H1 (cell line): ENCODE measurements at regions of chrX and their contacts with region 1.

Region 1: DNA sequence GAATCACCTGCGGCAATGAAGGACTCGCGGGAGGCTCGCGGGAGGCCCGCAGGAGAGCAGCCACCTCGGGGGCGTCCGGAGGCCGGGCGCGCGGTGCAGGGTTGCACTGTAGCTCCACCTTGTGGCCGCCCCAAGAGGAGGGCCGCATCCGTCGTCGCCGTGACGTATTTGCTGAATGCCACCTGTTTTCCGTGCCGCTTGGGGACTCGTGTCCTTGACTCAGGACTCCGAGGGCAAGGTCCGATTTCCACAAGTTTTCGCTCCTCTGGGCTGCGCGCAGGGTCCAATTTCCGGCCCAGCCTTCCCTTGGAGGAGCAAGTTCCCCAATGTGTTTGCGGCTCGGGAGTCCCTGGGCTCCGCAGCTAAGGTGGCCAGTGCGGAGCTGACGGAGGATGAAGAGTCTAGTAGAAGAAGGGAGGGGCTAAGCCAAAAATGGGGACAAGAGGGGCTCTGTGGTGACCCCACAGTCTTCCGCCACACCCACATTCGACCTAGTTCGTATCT is 10.7 kb upstream of the DLG3 start:
- DNase-seq: peak; percentile 36 to 76
- H3K4me3 ChIP-seq: peak overlapping the region; percentile 44 to 88 (median 76)
- H3K27ac ChIP-seq: peak overlapping the region; percentile 84
- H3K4me1 ChIP-seq: peaks cover 0 to 6% (median 1%) of the 10 kb centered on the region in 4 experiments; a peak in 4 of 7 replicates
- H3K27me3 ChIP-seq: no peaks in the 10 kb centered on the region
- CTCF ChIP-seq: peak in 2 of 3 experiments; percentile 56 to 80; a peak in 3 of 4 replicates
- EP300 ChIP-seq: no peak
- POLR2A ChIP-seq: 0 out of 3 replicates have a peak, but pooled peaks of 1 of the 2 experiments have one; percentile 9
- RAD21 ChIP-seq: peak; percentile 53 to 68; a peak in 3 of 4 replicates

Region 2: GRCh38 chrX:70262952-70263567 is 170.8 kb before region 1 on chrX:
- CTCF ChIA-PET with region 1: no interaction called
- POLR2A ChIA-PET with region 1: no interaction called
- DNase-seq: peak; percentile 25 to 70
- H3K4me3 ChIP-seq: no peak overlapping the region
- H3K27ac ChIP-seq: no peak overlapping the region
- H3K4me1 ChIP-seq: peaks cover 0 to 2% (median 0%) of the 10 kb centered on the region in 4 experiments; a peak in 1 of 7 replicates
- H3K27me3 ChIP-seq: no peaks in the 10 kb centered on the region
- CTCF ChIP-seq: peak; percentile 60 to 82 (median 78)
- EP300 ChIP-seq: no peak
- POLR2A ChIP-seq: no peak
- RAD21 ChIP-seq: peak; percentile 73 to 81

Region 3: GRCh38 chrX:70402721-70403120 is 31.2 kb before region 1 on chrX:
- CTCF ChIA-PET with region 1: no interaction called
- POLR2A ChIA-PET with region 1: no interaction called
- DNase-seq: no peak
- H3K4me3 ChIP-seq: no peak overlapping the region
- H3K27ac ChIP-seq: no peak overlapping the region
- H3K4me1 ChIP-seq: no peaks in the 10 kb centered on the region
- H3K27me3 ChIP-seq: no peaks in the 10 kb centered on the region
- CTCF ChIP-seq: no peak
- EP300 ChIP-seq: no peak
- POLR2A ChIP-seq: no peak
- RAD21 ChIP-seq: no peak

Region 4: DNA sequence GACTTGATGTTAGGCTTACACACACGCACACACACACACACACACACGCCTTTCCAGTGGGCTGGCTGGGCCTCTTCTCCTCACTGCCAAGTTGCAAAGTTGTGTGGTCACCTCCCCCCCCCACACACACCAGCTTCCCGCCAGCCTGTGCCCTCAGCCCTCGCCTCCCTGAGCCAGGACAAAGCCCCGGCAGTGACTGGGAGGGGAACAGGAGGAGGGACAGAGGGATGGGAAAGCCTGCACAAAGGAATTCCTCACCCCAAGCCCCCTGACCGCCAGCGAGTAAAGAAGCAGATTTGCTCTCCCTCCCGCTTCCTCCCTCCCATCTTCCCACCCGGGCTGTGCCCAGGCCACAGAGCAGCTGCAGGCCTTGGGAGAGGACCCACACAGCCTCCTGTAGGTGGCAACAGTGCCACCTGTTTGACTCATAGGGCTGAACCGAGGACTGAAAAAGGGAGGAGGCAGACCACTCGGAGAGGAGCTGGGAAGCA is 11.0 kb before region 1 on chrX and contains the start of gene GDPD2:
- CTCF ChIA-PET with region 1: interaction called, 43 read pairs
- POLR2A ChIA-PET with region 1: interaction called, 52 read pairs
- DNase-seq: peak; percentile 59 to 61
- H3K4me3 ChIP-seq: peak within 1 kb of the TSS; percentile 61 to 75 (median 64)
- H3K27ac ChIP-seq: peak within 1 kb of the TSS; percentile 73; the same call in 1 of the 2 replicates
- H3K4me1 ChIP-seq: peaks cover 5 to 20% (median 18%) of the 10 kb centered on the region in 4 experiments
- H3K27me3 ChIP-seq: no peaks in the 10 kb centered on the region
- CTCF ChIP-seq: peak; percentile 8 to 51 (median 34); a peak in 2 of 4 replicates
- EP300 ChIP-seq: no peak
- POLR2A ChIP-seq: peak in 1 of 2 experiments; percentile 37; a peak in 2 of 3 replicates
- RAD21 ChIP-seq: peak; percentile 44 to 51; a peak in 3 of 4 replicates
- total RNA-seq, gene GDPD2: 25.6 and 27.6 TPM in 2 replicates

Region 5: GRCh38 chrX:70444326-70444945 is 10.5 kb after region 1 on chrX and contains the start of gene DLG3:
- CTCF ChIA-PET with region 1: interaction called, 11 read pairs
- POLR2A ChIA-PET with region 1: interaction called, 22 read pairs
- DNase-seq: peak in 1 of 2 experiments; percentile 66
- H3K4me3 ChIP-seq: peak within 1 kb of the TSS; percentile 2 to 54 (median 10); a peak in 4 of 8 replicates
- H3K27ac ChIP-seq: no peak within 1 kb of the TSS
- H3K4me1 ChIP-seq: no peaks in the 10 kb centered on the region; a peak in 1 of 7 replicates
- H3K27me3 ChIP-seq: peaks cover 0 to 12% (median 10%) of the 10 kb centered on the region in 4 experiments; a peak in 4 of 7 replicates
- CTCF ChIP-seq: no peak
- EP300 ChIP-seq: no peak
- POLR2A ChIP-seq: no peak
- RAD21 ChIP-seq: no peak
- total RNA-seq, gene DLG3: 57.1 and 63.8 TPM in 2 replicates

Region 6: DNA sequence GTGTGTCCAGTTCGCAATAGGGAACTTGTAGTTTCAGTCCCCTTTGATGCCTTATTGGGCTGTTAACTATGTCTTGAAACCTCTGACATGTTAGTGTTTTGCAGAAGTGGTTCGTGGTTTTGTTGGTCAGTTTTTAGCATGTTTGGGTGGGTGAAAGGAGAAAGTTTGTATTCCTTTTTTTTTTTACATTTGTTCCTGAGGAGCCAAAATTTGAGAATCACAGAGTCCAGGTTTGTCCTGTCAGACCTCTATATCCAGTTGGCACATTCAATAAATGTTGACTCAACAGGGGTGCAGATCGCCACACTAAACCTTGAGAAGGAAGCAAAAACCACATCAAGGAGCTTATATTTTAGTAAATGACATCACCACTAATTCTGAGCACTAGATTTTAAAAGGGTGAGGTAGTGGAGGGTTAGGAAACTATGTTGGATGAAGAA is 37.0 kb after region 1 on chrX:
- CTCF ChIA-PET with region 1: no interaction called
- POLR2A ChIA-PET with region 1: no interaction called
- DNase-seq: no peak
- H3K4me3 ChIP-seq: no peak overlapping the region
- H3K27ac ChIP-seq: no peak overlapping the region
- H3K4me1 ChIP-seq: peaks cover 0 to 3% (median 1%) of the 10 kb centered on the region in 4 experiments; a peak in 3 of 7 replicates
- H3K27me3 ChIP-seq: no peaks in the 10 kb centered on the region
- CTCF ChIP-seq: no peak
- EP300 ChIP-seq: no peak
- POLR2A ChIP-seq: no peak
- RAD21 ChIP-seq: no peak